Aorta (tissue), 5 donors: ENCODE measurements at regions of chr16 and their contacts with region 1.

Region 1: GRCh38 chr16:22297114-22297878 is at the start of gene POLR3E:
- DNase-seq: peak; percentile 99 to 100
- ATAC-seq: peak; percentile 98
- H3K4me3 ChIP-seq: peak within 1 kb of the TSS; percentile 68 to 81
- H3K27ac ChIP-seq: peak within 1 kb of the TSS; percentile 49 to 78
- H3K4me1 ChIP-seq: no peaks in the 10 kb centered on the region
- H3K27me3 ChIP-seq: no peaks in the 10 kb centered on the region
- total RNA-seq, gene POLR3E: 35.8 to 36.7 TPM

Region 2: DNA sequence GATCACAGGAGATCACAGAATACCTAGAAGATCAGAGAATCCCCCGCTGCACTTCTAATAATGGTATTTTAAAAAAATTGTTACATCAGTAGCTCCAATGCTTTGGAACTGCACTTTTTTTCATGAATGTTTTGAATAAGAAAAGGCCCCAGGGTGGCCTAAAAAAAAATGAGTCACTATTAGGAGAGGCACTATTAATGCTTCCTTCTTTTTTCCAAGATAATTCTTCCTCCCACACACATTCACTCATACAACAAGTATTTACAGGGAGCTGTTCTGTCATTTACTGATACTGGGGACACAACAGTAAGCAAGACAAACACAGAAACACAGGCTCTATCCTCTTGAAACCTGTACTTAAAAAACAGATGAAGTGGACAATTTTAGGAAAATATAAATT is 295.7 kb before region 1 on chr16:
- intact Hi-C with region 1: loop called in 1 of 2 experiments (anchors 2 kb)
- DNase-seq: no peak
- ATAC-seq: no peak
- H3K4me3 ChIP-seq: no peak overlapping the region
- H3K27ac ChIP-seq: no peak overlapping the region
- H3K4me1 ChIP-seq: no peaks in the 10 kb centered on the region
- H3K27me3 ChIP-seq: no peaks in the 10 kb centered on the region

Region 3: GRCh38 chr16:22007509-22008214 is 289.6 kb before region 1 on chr16 and contains the start of gene MOSMO:
- intact Hi-C with region 1: loop called in 1 of 2 experiments (anchors 2 kb)
- DNase-seq: peak; percentile 82 to 94
- ATAC-seq: peak; percentile 92
- H3K4me3 ChIP-seq: peak within 1 kb of the TSS; percentile 84 to 95
- H3K27ac ChIP-seq: peak within 1 kb of the TSS in 1 of 2 donors; percentile 14
- H3K4me1 ChIP-seq: no peaks in the 10 kb centered on the region
- H3K27me3 ChIP-seq: no peaks in the 10 kb centered on the region
- total RNA-seq, gene MOSMO: 17.8 to 19.6 TPM

Region 4: GRCh38 chr16:22272870-22273595 is 24.3 kb before region 1 on chr16:
- intact Hi-C with region 1: no loop called
- DNase-seq: no peak
- ATAC-seq: no peak
- H3K4me3 ChIP-seq: no peak overlapping the region
- H3K27ac ChIP-seq: no peak overlapping the region
- H3K4me1 ChIP-seq: no peaks in the 10 kb centered on the region
- H3K27me3 ChIP-seq: no peaks in the 10 kb centered on the region